AG04449 (cell line): ENCODE measurements at regions of chr6 and their contacts with region 1.

Region 1: DNA sequence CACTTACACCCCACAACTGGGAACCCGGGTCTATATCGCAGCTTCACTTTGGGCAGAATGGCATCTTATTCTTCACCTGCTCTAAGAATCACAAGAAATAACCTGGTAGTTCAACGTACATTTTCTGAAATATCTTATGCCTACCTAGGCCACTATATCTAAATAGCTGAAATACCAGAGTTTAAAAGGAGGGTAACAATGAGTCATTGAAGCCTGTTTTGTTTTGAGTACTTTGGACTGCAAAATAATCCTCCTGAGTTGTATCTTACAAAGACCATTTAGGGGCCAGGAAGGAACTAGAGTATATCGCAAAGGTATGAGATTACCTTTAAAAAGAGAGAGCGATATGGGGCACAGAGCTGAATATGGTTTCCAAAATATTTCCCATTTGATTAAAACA is 96.7 kb upstream of the NUP153 start:
- DNase-seq: no peak
- H3K4me3 ChIP-seq: no peak overlapping the region
- CTCF ChIP-seq: no peak

Region 2: GRCh38 chr6:17156112-17156921 is 647.1 kb before region 1 on chr6:
- CTCF ChIA-PET with region 1: interaction called, 55 read pairs
- POLR2A ChIA-PET with region 1: no interaction called
- DNase-seq: peak; percentile 64
- H3K4me3 ChIP-seq: no peak overlapping the region
- CTCF ChIP-seq: peak; percentile 66

Region 3: GRCh38 chr6:17589406-17590096 is 213.9 kb before region 1 on chr6:
- CTCF ChIA-PET with region 1: interaction called, 39 read pairs
- POLR2A ChIA-PET with region 1: no interaction called
- DNase-seq: no peak
- H3K4me3 ChIP-seq: no peak overlapping the region
- CTCF ChIP-seq: peak; percentile 8

Region 4: DNA sequence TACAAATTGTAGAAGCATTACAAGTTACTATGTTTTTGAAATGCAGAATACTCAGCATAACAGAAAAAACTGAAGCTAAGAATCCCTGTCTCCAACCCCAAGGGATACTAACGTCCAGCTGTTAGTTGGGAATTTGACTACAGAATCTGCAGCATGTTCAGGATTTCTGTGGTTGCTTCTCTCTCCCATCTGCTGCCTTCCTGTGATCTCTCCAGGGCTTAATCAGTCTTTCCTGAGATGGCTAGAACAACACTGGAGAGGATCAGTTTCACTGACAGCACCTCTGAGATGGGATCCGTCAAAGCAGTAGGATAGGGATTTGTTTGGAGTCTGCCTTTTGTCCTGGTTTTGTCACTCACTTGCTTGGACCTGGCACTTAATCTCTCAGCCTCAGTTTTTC is 23.3 kb before region 1 on chr6:
- CTCF ChIA-PET with region 1: interaction called, 18 read pairs
- POLR2A ChIA-PET with region 1: no interaction called
- DNase-seq: no peak
- H3K4me3 ChIP-seq: no peak overlapping the region
- CTCF ChIP-seq: no peak

Region 5: GRCh38 chr6:17820055-17820454 is 16.6 kb after region 1 on chr6:
- CTCF ChIA-PET with region 1: interaction called, 71 read pairs
- POLR2A ChIA-PET with region 1: no interaction called
- DNase-seq: no peak
- H3K4me3 ChIP-seq: no peak overlapping the region
- CTCF ChIP-seq: no peak

Region 6: GRCh38 chr6:18062733-18063132 is 259.3 kb after region 1 on chr6:
- CTCF ChIA-PET with region 1: no interaction called
- POLR2A ChIA-PET with region 1: no interaction called
- DNase-seq: no peak
- H3K4me3 ChIP-seq: no peak overlapping the region
- CTCF ChIP-seq: no peak

Region 7: GRCh38 chr6:18076231-18076630 is 272.8 kb after region 1 on chr6:
- CTCF ChIA-PET with region 1: no interaction called
- POLR2A ChIA-PET with region 1: no interaction called
- DNase-seq: peak; percentile 16
- H3K4me3 ChIP-seq: no peak overlapping the region
- CTCF ChIP-seq: no peak